ENCODE measurements at regions of chr2 and their contacts with region 1.

Region 1: GRCh38 chr2:153478334-153479261 is at the start of gene RPRM:
- DNase-seq: peak; percentile 86 to 93 (median 90)
- H3K4me3 ChIP-seq: peak within 1 kb of the TSS; percentile 9 to 74 (median 33)
- H3K27ac ChIP-seq: peak within 1 kb of the TSS in 3 of 5 donors; percentile 69 to 87 (median 82)
- H3K4me1 ChIP-seq: peaks cover 0 to 31% of the 10 kb centered on the region in 2 donors
- H3K27me3 ChIP-seq: no peaks in the 10 kb centered on the region
- CTCF ChIP-seq: peak; percentile 50 to 96 (median 78)
- POLR2A ChIP-seq: peak; percentile 49 to 74
- total RNA-seq, gene RPRM: 5.6 to 38.8 (median 12.9) TPM

Region 2: DNA sequence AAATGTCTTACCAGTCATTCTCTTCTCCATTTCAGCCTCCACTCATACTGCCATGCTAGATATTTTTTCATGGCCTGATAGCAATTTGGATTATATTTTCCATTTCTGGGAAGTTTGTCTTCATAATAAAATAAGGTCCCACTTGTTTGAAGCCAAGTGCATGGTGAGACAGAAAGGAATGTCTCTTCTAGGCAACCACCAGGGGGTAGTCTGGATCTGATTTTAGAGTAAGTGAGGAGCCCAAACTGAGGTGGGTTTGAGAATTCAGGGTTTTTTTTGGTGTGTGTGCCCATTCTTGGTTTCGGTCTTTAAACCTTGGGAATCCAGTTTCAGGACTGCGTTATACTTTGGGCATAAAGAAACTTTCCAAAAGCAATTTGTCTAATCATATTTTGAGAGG is 315.5 kb before region 1 on chr2:
- intact Hi-C with region 1: loop called in 1 of 2 experiments (anchors 10 kb)
- DNase-seq: peak in 5 of 7 donors; percentile 23 to 48 (median 32)
- H3K4me3 ChIP-seq: no peak overlapping the region
- H3K27ac ChIP-seq: no peak overlapping the region
- H3K4me1 ChIP-seq: peaks cover 4 to 13% of the 10 kb centered on the region in 2 donors
- H3K27me3 ChIP-seq: no peaks in the 10 kb centered on the region
- CTCF ChIP-seq: peak; percentile 47 to 65 (median 61)
- POLR2A ChIP-seq: no peak

Region 3: DNA sequence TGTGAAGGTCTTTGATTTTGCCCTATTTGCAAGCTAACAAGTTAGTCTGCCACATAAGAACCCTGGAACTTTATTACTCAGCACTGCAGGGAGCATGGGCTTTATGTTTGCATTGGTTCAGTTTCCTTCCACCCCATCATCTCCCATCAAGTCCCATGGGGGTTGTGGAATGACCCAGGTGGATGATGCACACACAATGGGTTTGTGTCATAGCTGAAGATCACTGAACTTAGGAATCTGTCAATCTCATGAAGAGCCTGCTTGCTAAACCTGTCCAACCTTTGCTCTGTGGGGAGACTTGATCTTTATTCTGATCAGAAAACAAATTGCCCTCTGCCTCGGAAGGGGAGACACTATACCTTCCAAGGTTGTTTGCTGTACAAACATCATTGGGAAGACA is 265.5 kb before region 1 on chr2:
- intact Hi-C with region 1: no loop called
- DNase-seq: no peak
- H3K4me3 ChIP-seq: no peak overlapping the region
- H3K27ac ChIP-seq: no peak overlapping the region
- H3K4me1 ChIP-seq: no peaks in the 10 kb centered on the region
- H3K27me3 ChIP-seq: no peaks in the 10 kb centered on the region
- CTCF ChIP-seq: no peak
- POLR2A ChIP-seq: no peak

Region 4: DNA sequence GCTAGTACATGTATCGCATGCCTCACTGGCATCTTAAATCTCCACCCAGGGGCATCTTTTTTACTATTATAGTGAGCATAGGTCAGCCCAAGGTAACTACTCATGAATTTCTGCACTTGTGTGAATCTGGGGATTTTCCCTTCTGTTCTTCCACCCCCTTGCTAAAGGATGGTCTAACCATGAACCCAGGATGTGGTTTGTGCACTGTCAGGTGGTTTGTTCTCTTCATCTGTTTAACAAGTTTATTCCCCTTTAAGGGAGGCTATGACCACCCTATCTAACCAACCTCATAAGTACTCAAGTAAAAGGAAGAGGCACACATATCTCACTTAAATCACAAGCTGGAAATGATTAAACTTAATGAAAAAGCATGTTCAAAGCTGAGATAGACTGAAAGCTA is 243.1 kb before region 1 on chr2:
- intact Hi-C with region 1: no loop called
- DNase-seq: no peak
- H3K4me3 ChIP-seq: no peak overlapping the region
- H3K27ac ChIP-seq: no peak overlapping the region
- H3K4me1 ChIP-seq: no peaks in the 10 kb centered on the region
- H3K27me3 ChIP-seq: no peaks in the 10 kb centered on the region
- CTCF ChIP-seq: no peak
- POLR2A ChIP-seq: no peak

Region 5: GRCh38 chr2:153668923-153669322 is 190.3 kb after region 1 on chr2:
- intact Hi-C with region 1: no loop called
- DNase-seq: no peak
- H3K4me3 ChIP-seq: no peak overlapping the region
- H3K27ac ChIP-seq: no peak overlapping the region
- H3K4me1 ChIP-seq: no peaks in the 10 kb centered on the region
- H3K27me3 ChIP-seq: no peaks in the 10 kb centered on the region
- CTCF ChIP-seq: no peak
- POLR2A ChIP-seq: no peak

Measured in adrenal gland (tissue), 19 donors.